ENCODE measurements at regions of chr16 and their contacts with region 1.

Region 1: GRCh38 chr16:31427441-31428278 is 500 bp downstream of the COX6A2 start:
- DNase-seq: peak; percentile 75
- H3K4me3 ChIP-seq: peak overlapping the region; percentile 64
- H3K27ac ChIP-seq: no peak overlapping the region
- H3K4me1 ChIP-seq: no peaks in the 10 kb centered on the region
- H3K27me3 ChIP-seq: peaks cover 5% of the 10 kb centered on the region; the same call in 1 of the 2 replicates

Region 2: GRCh38 chr16:30984669-30985400 is 442.8 kb before region 1 on chr16 and contains the start of gene HSD3B7:
- in situ Hi-C with region 1: loop called (anchors 25 kb)
- DNase-seq: peak; percentile 89
- H3K4me3 ChIP-seq: peak within 1 kb of the TSS; percentile 73
- H3K27ac ChIP-seq: peak within 1 kb of the TSS; percentile 36
- H3K4me1 ChIP-seq: peaks cover 19% of the 10 kb centered on the region
- H3K27me3 ChIP-seq: no peaks in the 10 kb centered on the region
- total RNA-seq, gene HSD3B7: 69.7 and 73.2 TPM in 2 replicates

Region 3: GRCh38 chr16:31194898-31195297 is 232.8 kb before region 1 on chr16:
- in situ Hi-C with region 1: no loop called
- DNase-seq: no peak
- H3K4me3 ChIP-seq: no peak overlapping the region
- H3K27ac ChIP-seq: no peak overlapping the region
- H3K4me1 ChIP-seq: no peaks in the 10 kb centered on the region
- H3K27me3 ChIP-seq: no peaks in the 10 kb centered on the region

Region 4: DNA sequence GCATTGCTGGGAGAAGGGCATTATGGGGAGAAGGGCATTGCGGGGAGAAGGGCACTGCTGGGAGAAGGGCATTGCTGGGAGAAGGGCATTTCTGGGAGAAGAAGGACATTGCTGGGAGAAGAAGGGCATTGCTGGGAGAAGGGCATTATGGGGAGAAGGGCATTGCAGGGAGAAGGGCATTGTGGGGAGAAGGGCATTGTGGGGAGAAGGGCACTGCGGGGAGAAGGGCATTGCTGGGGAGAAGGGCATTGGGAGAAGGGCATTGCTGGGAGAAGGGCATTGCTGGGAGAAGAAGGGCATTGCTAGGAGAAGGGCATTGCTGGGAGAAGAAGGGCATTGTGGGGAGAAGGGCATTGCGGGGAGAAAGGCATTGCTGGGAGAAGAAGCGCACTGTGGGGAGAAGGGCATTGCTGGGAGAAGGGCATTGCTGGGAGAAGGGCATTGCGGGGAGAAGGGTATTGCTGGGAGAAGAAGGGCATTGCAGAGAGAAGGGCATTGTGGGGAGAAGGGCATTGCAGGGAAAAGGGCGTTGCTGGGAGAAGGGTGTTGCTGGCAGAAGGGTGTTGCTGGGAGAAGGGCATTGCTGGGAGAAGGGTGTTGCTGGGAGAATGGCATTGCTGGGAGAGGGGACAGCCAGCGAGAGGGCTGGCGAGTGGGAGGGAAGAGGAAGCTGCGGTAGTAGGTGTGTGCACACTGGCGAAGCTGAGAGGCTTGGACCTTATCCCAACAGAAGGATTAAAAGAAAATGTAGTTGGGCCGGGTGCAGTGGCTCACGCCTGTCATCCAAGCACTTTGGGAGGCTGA is 206.1 kb before region 1 on chr16:
- in situ Hi-C with region 1: loop called (anchors 10 kb)
- DNase-seq: no peak
- H3K4me3 ChIP-seq: no peak overlapping the region
- H3K27ac ChIP-seq: no peak overlapping the region
- H3K4me1 ChIP-seq: no peaks in the 10 kb centered on the region
- H3K27me3 ChIP-seq: peaks cover 22% of the 10 kb centered on the region

Region 5: GRCh38 chr16:31519759-31520431 is 92.2 kb after region 1 on chr16:
- in situ Hi-C with region 1: no loop called
- DNase-seq: no peak
- H3K4me3 ChIP-seq: no peak overlapping the region
- H3K27ac ChIP-seq: no peak overlapping the region
- H3K4me1 ChIP-seq: no peaks in the 10 kb centered on the region
- H3K27me3 ChIP-seq: 0 out of 2 replicates have a peak, but pooled peaks cover 4% of the 10 kb centered on the region

Measured in GM23248 (cell line).